Colonic mucosa (tissue), 4 donors: ENCODE measurements at regions of chr15 and their contacts with region 1.

Region 1: DNA sequence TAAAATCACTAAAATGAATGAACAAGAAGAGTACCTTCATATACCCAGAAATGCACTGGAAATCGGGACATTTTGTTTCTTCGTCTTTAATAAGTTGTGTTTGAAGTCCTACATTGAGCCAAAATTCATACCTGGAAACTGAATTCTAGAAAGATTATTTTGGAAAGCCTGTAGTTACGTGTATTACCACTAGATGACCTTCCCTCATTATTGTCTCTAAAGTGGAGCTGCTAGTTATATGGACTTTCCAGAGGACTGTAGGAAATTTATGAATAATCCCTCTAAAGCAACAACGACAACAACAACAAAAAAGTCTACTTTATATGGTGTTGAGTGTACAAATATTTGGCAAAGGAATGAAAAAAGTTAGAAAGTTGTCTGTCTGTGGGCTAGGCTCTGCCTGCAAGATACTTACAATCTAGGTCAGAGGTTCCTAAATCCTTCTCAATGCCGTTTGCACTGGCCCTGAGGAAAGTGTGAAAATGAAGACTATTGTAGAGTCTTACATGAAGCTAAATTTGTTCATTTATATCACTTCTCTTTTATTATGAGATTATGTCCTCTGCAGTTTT is 234.8 kb upstream of the NR2E3 start:
- DNase-seq: no peak
- H3K4me3 ChIP-seq: no peak overlapping the region
- H3K27ac ChIP-seq: no peak overlapping the region
- H3K4me1 ChIP-seq: no peaks in the 10 kb centered on the region
- H3K27me3 ChIP-seq: no peaks in the 10 kb centered on the region
- CTCF ChIP-seq: peak; percentile 46

Region 2: GRCh38 chr15:71611551-71612396 is 36.2 kb after region 1 on chr15:
- intact Hi-C with region 1: no loop called
- DNase-seq: no peak
- H3K4me3 ChIP-seq: no peak overlapping the region
- H3K27ac ChIP-seq: no peak overlapping the region
- H3K4me1 ChIP-seq: no peaks in the 10 kb centered on the region
- H3K27me3 ChIP-seq: no peaks in the 10 kb centered on the region
- CTCF ChIP-seq: no peak

Region 3: DNA sequence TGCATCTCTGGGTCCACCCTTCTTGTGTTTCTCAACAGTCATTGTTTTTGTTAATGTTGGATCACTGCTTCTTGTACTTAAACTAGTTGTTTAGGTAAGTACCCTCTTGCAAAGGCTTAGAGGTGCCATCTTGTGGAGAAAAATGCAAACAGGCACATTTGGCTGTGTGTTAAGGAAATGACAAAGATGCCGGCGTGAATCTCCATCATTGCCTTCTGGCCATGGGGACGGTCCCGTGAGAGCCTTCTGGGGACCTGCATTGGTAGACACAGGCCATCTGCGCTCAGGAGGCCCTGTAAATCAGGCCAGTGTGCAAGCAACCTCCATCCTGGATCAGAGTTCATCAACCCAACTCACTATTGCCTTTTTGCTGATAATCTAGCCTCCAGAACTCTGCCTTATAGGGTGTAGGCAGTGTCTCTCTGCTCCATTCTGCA is 76.2 kb after region 1 on chr15:
- intact Hi-C with region 1: loop called (anchors 10 kb)
- DNase-seq: peak; percentile 37
- H3K4me3 ChIP-seq: no peak overlapping the region
- H3K27ac ChIP-seq: no peak overlapping the region
- H3K4me1 ChIP-seq: no peaks in the 10 kb centered on the region
- H3K27me3 ChIP-seq: no peaks in the 10 kb centered on the region
- CTCF ChIP-seq: no peak

Region 4: GRCh38 chr15:71730277-71731144 is 155.0 kb after region 1 on chr15:
- intact Hi-C with region 1: loop called (anchors 5 kb)
- DNase-seq: peak; percentile 56
- H3K4me3 ChIP-seq: no peak overlapping the region
- H3K27ac ChIP-seq: no peak overlapping the region
- H3K4me1 ChIP-seq: no peaks in the 10 kb centered on the region
- H3K27me3 ChIP-seq: no peaks in the 10 kb centered on the region
- CTCF ChIP-seq: peak; percentile 66